Mammary epithelial cell (primary cell): ENCODE measurements at regions of chr1 and their contacts with region 1.

Region 1: GRCh38 chr1:33219881-33220661 is 36.2 kb upstream of the ZNF362 start:
- DNase-seq: peak; percentile 86
- H3K4me3 ChIP-seq: no peak overlapping the region
- H3K27ac ChIP-seq: peak overlapping the region; percentile 84
- H3K4me1 ChIP-seq: peaks cover 39% of the 10 kb centered on the region
- H3K27me3 ChIP-seq: no peaks in the 10 kb centered on the region
- CTCF ChIP-seq: no peak

Region 2: GRCh38 chr1:33256701-33257399 is 36.8 kb after region 1 on chr1:
- CTCF ChIA-PET with region 1: no interaction called
- dilution Hi-C with region 1: no loop called
- in situ Hi-C with region 1: no loop called
- intact Hi-C with region 1: loop called (anchors 1 kb)
- DNase-seq: peak; percentile 66
- H3K4me3 ChIP-seq: peak overlapping the region; percentile 57 to 92 (median 59)
- H3K27ac ChIP-seq: peak overlapping the region; percentile 70
- H3K4me1 ChIP-seq: peaks cover 17% of the 10 kb centered on the region
- H3K27me3 ChIP-seq: no peaks in the 10 kb centered on the region
- CTCF ChIP-seq: no peak

Region 3: GRCh38 chr1:33349778-33350610 is 129.9 kb after region 1 on chr1:
- CTCF ChIA-PET with region 1: no interaction called
- dilution Hi-C with region 1: no loop called
- in situ Hi-C with region 1: loop called in 1 of 2 experiments (anchors 25 kb)
- intact Hi-C with region 1: loop called (anchors 5 kb)
- DNase-seq: peak; percentile 72
- H3K4me3 ChIP-seq: peak overlapping the region; percentile 45 to 82 (median 73)
- H3K27ac ChIP-seq: peak overlapping the region; percentile 41
- H3K4me1 ChIP-seq: peaks cover 38% of the 10 kb centered on the region
- H3K27me3 ChIP-seq: no peaks in the 10 kb centered on the region
- CTCF ChIP-seq: no peak

Region 4: GRCh38 chr1:33455539-33456501 is 235.7 kb after region 1 on chr1:
- CTCF ChIA-PET with region 1: no interaction called
- dilution Hi-C with region 1: no loop called
- in situ Hi-C with region 1: loop called in 1 of 2 experiments (anchors 10 kb)
- intact Hi-C with region 1: loop called (anchors 1 kb)
- DNase-seq: peak; percentile 74
- H3K4me3 ChIP-seq: no peak overlapping the region
- H3K27ac ChIP-seq: no peak overlapping the region
- H3K4me1 ChIP-seq: peaks cover 36% of the 10 kb centered on the region
- H3K27me3 ChIP-seq: no peaks in the 10 kb centered on the region
- CTCF ChIP-seq: peak; percentile 91 to 92

Region 5: DNA sequence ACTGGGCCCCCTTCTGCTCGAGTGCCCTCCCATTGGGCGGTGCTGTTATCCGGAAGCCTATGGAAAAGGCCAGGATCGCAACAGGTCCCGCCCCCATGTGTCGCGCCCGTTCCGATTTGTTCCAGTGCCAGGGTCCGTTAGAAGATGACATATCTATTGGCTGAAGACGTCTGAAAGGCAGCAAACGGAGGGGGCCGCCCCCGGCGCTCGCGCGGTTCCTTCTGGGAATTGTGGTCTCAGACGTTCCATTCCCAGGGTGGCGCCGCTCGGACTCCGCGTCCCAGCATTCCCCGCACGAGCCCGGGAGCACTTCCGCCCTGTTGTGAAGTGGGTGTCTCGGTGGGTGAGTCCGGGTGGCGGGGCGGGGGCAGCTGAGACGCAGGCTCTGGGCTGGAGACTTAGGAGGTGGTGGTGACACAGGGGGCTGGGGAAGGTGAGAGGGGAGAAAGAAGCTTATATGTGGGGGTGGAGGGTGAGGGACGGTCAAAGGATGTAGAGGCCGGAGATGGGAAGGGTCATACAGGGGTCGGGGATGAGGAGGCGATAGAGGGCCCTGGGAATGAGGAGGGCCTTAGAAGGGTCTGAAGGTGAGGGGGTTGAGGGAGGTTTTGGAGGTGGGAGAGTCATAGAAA is 252.4 kb after region 1 on chr1 and contains the start of gene ZSCAN20:
- CTCF ChIA-PET with region 1: no interaction called
- dilution Hi-C with region 1: no loop called
- in situ Hi-C with region 1: loop called in 1 of 2 experiments (anchors 10 kb)
- intact Hi-C with region 1: loop called (anchors 1 kb)
- DNase-seq: peak; percentile 97
- H3K4me3 ChIP-seq: peak within 1 kb of the TSS; percentile 72 to 84 (median 79)
- H3K27ac ChIP-seq: peak within 1 kb of the TSS; percentile 44
- H3K4me1 ChIP-seq: peaks cover 19% of the 10 kb centered on the region
- H3K27me3 ChIP-seq: no peaks in the 10 kb centered on the region
- CTCF ChIP-seq: no peak
- total RNA-seq, gene ZSCAN20: 5.3 to 8.0 TPM